ENCODE measurements at regions of chr9 and their contacts with region 1.

Region 1: DNA sequence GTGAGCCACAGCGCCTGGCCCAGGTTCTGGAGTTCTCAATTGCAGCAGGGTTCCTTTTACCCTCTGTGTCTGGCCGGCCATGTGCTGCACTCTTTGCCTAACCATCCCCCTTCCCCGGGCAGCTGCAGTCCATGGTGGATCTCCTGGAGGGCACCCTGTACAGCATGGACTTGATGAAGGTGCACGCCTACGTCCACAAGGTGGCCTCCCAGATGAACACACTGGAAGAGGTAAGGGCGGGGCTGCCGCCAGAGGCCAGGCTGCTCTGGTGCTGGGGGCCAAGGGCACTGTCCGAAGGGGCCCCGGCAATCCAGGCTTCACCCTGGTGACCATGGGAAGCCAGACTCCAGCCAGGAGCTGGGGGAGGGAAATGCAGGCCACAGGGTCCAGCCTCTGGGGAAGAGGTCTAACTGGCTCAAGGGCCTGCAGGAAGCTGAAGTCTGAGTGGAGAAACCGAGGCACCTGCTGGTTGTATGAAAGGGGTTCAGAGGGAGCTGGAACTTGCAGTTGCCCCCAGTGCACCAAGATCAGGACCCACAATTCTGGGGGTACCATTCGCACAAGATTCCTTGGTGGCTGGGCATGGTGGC is 18.1 kb downstream of the OLFML2A start:
- DNase-seq: no peak
- ATAC-seq: peak in 3 of 4 donors; percentile 30 to 41 (median 35)
- H3K4me3 ChIP-seq: no peak overlapping the region
- H3K27ac ChIP-seq: peak overlapping the region in 8 of 12 donors; percentile 9 to 75 (median 60)
- H3K4me1 ChIP-seq: peaks cover 0 to 72% (median 52%) of the 10 kb centered on the region in 12 donors
- H3K27me3 ChIP-seq: no peaks in the 10 kb centered on the region
- CTCF ChIP-seq: peak in 3 of 12 donors; percentile 10 to 28 (median 12)
- POLR2A ChIP-seq: no peak

Region 2: GRCh38 chr9:124776954-124777665 is 17.9 kb before region 1 on chr9 and contains the start of gene OLFML2A:
- intact Hi-C with region 1: loop called in 1 of 10 experiments (anchors 2 kb)
- DNase-seq: peak in 2 of 5 donors; percentile 49 to 58
- ATAC-seq: peak in 3 of 4 donors; percentile 22 to 57 (median 53)
- H3K4me3 ChIP-seq: peak within 1 kb of the TSS; percentile 48 to 90 (median 66)
- H3K27ac ChIP-seq: peak within 1 kb of the TSS in 11 of 12 donors; percentile 6 to 88 (median 74)
- H3K4me1 ChIP-seq: peaks cover 0 to 62% (median 32%) of the 10 kb centered on the region in 12 donors
- H3K27me3 ChIP-seq: peaks cover 0 to 4% (median 0%) of the 10 kb centered on the region in 9 donors
- CTCF ChIP-seq: peak; percentile 25 to 66 (median 50)
- POLR2A ChIP-seq: peak in 1 of 2 donors; percentile 61
- total RNA-seq, gene OLFML2A: 15.5 to 71.1 (median 37.3) TPM

Region 3: GRCh38 chr9:124834591-124834990 is 39.6 kb after region 1 on chr9:
- intact Hi-C with region 1: loop called in 3 of 10 experiments (anchors 2 to 5 kb)
- DNase-seq: peak in 2 of 5 donors; percentile 48 to 70
- ATAC-seq: peak in 3 of 4 donors; percentile 2 to 26 (median 21)
- H3K4me3 ChIP-seq: peak overlapping the region in 1 of 12 donors; percentile 4
- H3K27ac ChIP-seq: peak overlapping the region; percentile 75 to 95 (median 88)
- H3K4me1 ChIP-seq: peaks cover 0 to 53% (median 41%) of the 10 kb centered on the region in 12 donors
- H3K27me3 ChIP-seq: no peaks in the 10 kb centered on the region
- CTCF ChIP-seq: no peak
- POLR2A ChIP-seq: no peak

Region 4: GRCh38 chr9:124839612-124840299 is 44.8 kb after region 1 on chr9:
- intact Hi-C with region 1: loop called in 2 of 10 experiments (anchors 5 kb)
- DNase-seq: peak in 1 of 5 donors; percentile 31
- ATAC-seq: peak in 1 of 4 donors; percentile 24
- H3K4me3 ChIP-seq: no peak overlapping the region
- H3K27ac ChIP-seq: peak overlapping the region in 7 of 12 donors; percentile 5 to 54 (median 45)
- H3K4me1 ChIP-seq: peaks cover 0 to 31% (median 13%) of the 10 kb centered on the region in 12 donors
- H3K27me3 ChIP-seq: no peaks in the 10 kb centered on the region
- CTCF ChIP-seq: peak; percentile 15 to 56 (median 40)
- POLR2A ChIP-seq: no peak